Testis (tissue), 5 donors: ENCODE measurements at regions of chr5 and their contacts with region 1.

Region 1: GRCh38 chr5:59188419-59189225 is 605.7 kb downstream of the RAB3C start:
- DNase-seq: peak; percentile 79
- H3K4me3 ChIP-seq: peak overlapping the region; percentile 19 to 20
- H3K27ac ChIP-seq: no peak overlapping the region
- H3K4me1 ChIP-seq: no peaks in the 10 kb centered on the region
- H3K27me3 ChIP-seq: no peaks in the 10 kb centered on the region
- CTCF ChIP-seq: peak; percentile 72 to 85 (median 76)
- POLR2A ChIP-seq: no peak

Region 2: GRCh38 chr5:59312223-59312622 is 123.6 kb after region 1 on chr5:
- intact Hi-C with region 1: no loop called
- DNase-seq: no peak
- H3K4me3 ChIP-seq: no peak overlapping the region
- H3K27ac ChIP-seq: no peak overlapping the region
- H3K4me1 ChIP-seq: peaks cover under 1% of the 10 kb centered on the region
- H3K27me3 ChIP-seq: no peaks in the 10 kb centered on the region
- CTCF ChIP-seq: no peak
- POLR2A ChIP-seq: no peak

Region 3: DNA sequence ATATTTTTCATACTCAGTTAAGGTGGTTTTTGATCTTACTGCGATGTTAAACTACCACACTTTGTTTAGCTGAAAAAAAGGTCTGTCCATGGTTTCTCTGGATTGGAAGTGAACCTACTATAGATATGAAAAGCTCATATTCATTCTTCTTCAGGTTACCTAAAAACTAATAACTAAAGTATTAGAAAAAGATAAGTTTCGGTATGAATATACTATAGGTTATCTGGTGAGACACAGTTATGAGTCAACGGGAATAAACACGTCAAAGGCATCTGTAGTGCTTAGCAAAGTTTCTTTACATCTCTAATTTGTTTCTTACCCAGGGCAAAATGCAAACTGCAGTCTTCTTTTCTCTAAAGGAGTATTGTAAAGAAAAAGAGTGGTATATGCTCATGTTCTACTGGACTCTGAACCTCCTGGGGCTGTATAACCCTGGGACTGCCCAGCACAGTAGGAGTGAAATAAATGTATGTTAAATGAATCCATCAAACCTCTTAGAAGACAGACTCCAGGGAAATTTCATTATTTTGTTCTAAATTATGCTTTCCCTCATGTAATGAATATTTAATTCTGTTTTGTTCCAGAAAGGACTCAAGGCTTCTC is 183.0 kb after region 1 on chr5:
- intact Hi-C with region 1: loop called (anchors 10 kb)
- DNase-seq: no peak
- H3K4me3 ChIP-seq: no peak overlapping the region
- H3K27ac ChIP-seq: no peak overlapping the region
- H3K4me1 ChIP-seq: no peaks in the 10 kb centered on the region
- H3K27me3 ChIP-seq: no peaks in the 10 kb centered on the region
- CTCF ChIP-seq: no peak
- POLR2A ChIP-seq: no peak